Naive thymus-derived CD4-positive, alpha-beta T cell (primary cell): ENCODE measurements at regions of chr16 and their contacts with region 1.

Region 1: GRCh38 chr16:68310761-68311511 is at the starts of genes PRMT7 and SLC7A6OS:
- DNase-seq: peak; percentile 77 to 94 (median 92)
- ATAC-seq: peak; percentile 99
- H3K4me3 ChIP-seq: peak within 1 kb of the TSS; percentile 99
- H3K4me3 Mint-ChIP-seq: peak within 1 kb of the TSS; percentile 88 to 100 (median 98)
- H3K27ac ChIP-seq: peak within 1 kb of the TSS; percentile 91
- H3K27ac Mint-ChIP-seq: peak within 1 kb of the TSS; percentile 77 to 99 (median 96)
- H3K4me1 ChIP-seq: peaks cover 25 to 32% of the 10 kb centered on the region in 2 donors
- H3K4me1 Mint-ChIP-seq: peaks cover 33 to 69% (median 59%) of the 10 kb centered on the region in 7 donors
- H3K27me3 ChIP-seq: no peaks in the 10 kb centered on the region
- H3K27me3 Mint-ChIP-seq: no peaks in the 10 kb centered on the region
- total RNA-seq, gene PRMT7: 60.8 to 95.1 (median 89.4) TPM
- total RNA-seq, gene SLC7A6OS: 31.4 to 50.3 (median 34.8) TPM

Region 2: GRCh38 chr16:67480833-67481560 is 829.9 kb before region 1 on chr16 and contains the start of gene ATP6V0D1:
- CTCF ChIA-PET with region 1: no interaction called
- POLR2A ChIA-PET with region 1: no interaction called
- intact Hi-C with region 1: no loop called
- DNase-seq: peak; percentile 97 to 100 (median 99)
- ATAC-seq: peak; percentile 94
- H3K4me3 ChIP-seq: peak within 1 kb of the TSS; percentile 92
- H3K4me3 Mint-ChIP-seq: peak within 1 kb of the TSS; percentile 95 to 100 (median 99)
- H3K27ac ChIP-seq: peak within 1 kb of the TSS; percentile 99
- H3K27ac Mint-ChIP-seq: peak within 1 kb of the TSS; percentile 95 to 99 (median 98)
- H3K4me1 ChIP-seq: peaks cover 15 to 25% of the 10 kb centered on the region in 2 donors
- H3K4me1 Mint-ChIP-seq: peaks cover 20 to 60% (median 37%) of the 10 kb centered on the region in 7 donors
- H3K27me3 ChIP-seq: no peaks in the 10 kb centered on the region
- H3K27me3 Mint-ChIP-seq: no peaks in the 10 kb centered on the region
- total RNA-seq, gene ATP6V0D1: 35.8 to 104 (median 54.7) TPM

Region 3: DNA sequence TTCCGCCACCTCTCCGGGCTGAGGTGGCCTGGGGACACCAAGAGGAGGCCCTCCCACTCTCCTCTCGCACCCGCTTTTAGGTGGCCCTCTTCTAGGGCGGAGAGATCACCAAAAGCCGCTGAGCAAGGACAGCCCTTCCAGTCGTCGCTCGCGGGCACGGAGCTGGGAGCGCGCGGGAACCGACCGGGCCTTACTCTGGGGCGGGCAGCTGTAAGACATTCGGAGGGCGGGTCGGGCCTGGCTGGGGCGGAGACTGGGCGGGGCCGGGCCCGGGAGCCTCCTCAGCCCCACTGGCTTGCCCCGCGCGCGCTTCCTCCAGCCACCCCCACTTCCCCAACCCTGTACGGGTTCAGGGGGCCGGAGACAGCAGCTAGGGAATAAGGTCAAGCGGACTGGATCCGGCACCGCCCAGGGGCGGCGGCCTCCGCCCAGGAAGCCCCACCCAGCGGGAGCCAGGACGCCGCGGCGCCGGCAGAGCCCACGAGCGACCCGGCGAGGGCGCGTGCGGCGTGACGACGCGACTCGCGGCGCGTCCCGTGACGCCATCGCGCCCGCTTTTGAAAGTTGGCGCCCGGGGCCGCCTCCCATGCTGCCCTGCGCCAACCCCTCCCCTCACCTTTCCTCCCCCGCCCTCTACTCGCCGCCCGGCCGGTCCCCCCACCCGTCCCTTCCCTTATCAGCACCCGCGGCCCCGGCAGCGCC is 749.0 kb before region 1 on chr16:
- CTCF ChIA-PET with region 1: no interaction called
- POLR2A ChIA-PET with region 1: no interaction called
- intact Hi-C with region 1: loop called in 1 of 2 experiments (anchors 5 kb)
- DNase-seq: peak; percentile 93 to 98 (median 96)
- ATAC-seq: peak; percentile 86
- H3K4me3 ChIP-seq: peak overlapping the region; percentile 72
- H3K4me3 Mint-ChIP-seq: peak overlapping the region; percentile 85 to 93 (median 90)
- H3K27ac ChIP-seq: peak overlapping the region; percentile 98
- H3K27ac Mint-ChIP-seq: peak overlapping the region; percentile 90 to 99 (median 96)
- H3K4me1 ChIP-seq: peaks cover 30 to 36% of the 10 kb centered on the region in 2 donors
- H3K4me1 Mint-ChIP-seq: peaks cover 28 to 64% (median 46%) of the 10 kb centered on the region in 7 donors
- H3K27me3 ChIP-seq: no peaks in the 10 kb centered on the region
- H3K27me3 Mint-ChIP-seq: no peaks in the 10 kb centered on the region

Region 4: GRCh38 chr16:68237243-68238028 is 73.5 kb before region 1 on chr16:
- CTCF ChIA-PET with region 1: interaction called, 4 read pairs
- POLR2A ChIA-PET with region 1: interaction called, 3 read pairs
- intact Hi-C with region 1: loop called in 1 of 2 experiments (anchors 2 kb)
- DNase-seq: peak; percentile 71 to 90 (median 83)
- ATAC-seq: peak; percentile 88
- H3K4me3 ChIP-seq: peak overlapping the region; percentile 91
- H3K4me3 Mint-ChIP-seq: peak overlapping the region; percentile 90 to 99 (median 96)
- H3K27ac ChIP-seq: peak overlapping the region; percentile 67
- H3K27ac Mint-ChIP-seq: peak overlapping the region; percentile 72 to 95 (median 87)
- H3K4me1 ChIP-seq: peaks cover 6 to 10% of the 10 kb centered on the region in 2 donors
- H3K4me1 Mint-ChIP-seq: peaks cover 23 to 45% (median 34%) of the 10 kb centered on the region in 7 donors
- H3K27me3 ChIP-seq: no peaks in the 10 kb centered on the region
- H3K27me3 Mint-ChIP-seq: peaks cover 0 to 13% (median 0%) of the 10 kb centered on the region in 5 donors

Region 5: DNA sequence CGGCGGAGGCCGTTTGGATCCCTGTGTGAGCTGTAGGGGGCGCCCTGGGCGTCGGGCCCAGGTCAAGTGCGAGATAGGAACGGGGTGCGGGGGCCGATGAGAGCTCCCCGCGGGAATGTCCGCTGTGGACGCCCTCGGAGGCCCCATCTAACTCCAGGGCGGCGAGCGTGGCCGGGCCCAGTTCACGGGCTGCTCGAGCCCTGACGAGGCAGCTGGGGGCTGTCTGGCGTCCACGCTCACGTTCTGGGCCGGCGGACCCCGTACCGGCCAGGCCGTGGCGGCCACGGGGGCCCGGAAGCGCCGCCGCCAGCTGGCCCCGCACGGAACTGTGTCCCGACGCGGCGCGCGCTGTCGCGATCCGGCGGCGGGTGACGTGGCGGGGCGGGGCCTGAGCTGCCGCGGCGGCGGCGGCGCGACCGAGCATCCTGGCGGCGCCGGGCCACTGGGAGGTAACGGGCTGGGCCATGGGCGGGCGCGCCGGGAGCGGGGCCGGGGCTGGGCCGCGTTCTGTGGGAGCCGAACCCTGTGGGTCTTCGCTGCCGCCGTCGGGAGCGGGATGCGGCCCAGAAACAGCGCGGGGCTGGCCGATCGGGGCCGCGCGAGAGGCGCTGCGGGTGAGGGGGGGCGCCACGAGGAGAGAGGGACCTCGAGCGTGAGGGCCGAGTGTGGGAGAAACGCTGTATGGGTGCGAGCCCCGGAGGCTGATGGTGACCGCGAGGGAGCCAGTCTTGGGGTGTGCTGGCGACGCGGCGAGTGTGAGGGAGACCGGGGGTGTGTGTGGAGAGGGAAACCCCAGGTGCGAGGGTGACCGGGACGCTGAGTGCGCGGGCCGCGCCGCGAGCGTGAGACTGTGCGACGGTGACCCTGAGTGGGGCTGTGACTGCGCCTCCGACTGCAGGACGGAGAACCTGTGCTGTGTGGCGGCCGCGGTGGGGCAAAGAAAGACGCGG is 46.5 kb before region 1 on chr16 and contains the start of gene SLC7A6:
- CTCF ChIA-PET with region 1: interaction called, 58 read pairs
- POLR2A ChIA-PET with region 1: interaction called, 68 read pairs
- intact Hi-C with region 1: loop called (anchors 1 kb)
- DNase-seq: peak; percentile 78 to 91 (median 84)
- ATAC-seq: peak; percentile 83
- H3K4me3 ChIP-seq: peak within 1 kb of the TSS; percentile 78
- H3K4me3 Mint-ChIP-seq: peak within 1 kb of the TSS; percentile 93 to 100 (median 97)
- H3K27ac ChIP-seq: peak within 1 kb of the TSS; percentile 99
- H3K27ac Mint-ChIP-seq: peak within 1 kb of the TSS; percentile 89 to 100 (median 98)
- H3K4me1 ChIP-seq: peaks cover 27 to 39% of the 10 kb centered on the region in 2 donors
- H3K4me1 Mint-ChIP-seq: peaks cover 40 to 69% (median 56%) of the 10 kb centered on the region in 7 donors
- H3K27me3 ChIP-seq: no peaks in the 10 kb centered on the region
- H3K27me3 Mint-ChIP-seq: no peaks in the 10 kb centered on the region
- total RNA-seq, gene SLC7A6: 112 to 248 (median 207) TPM

Region 6: GRCh38 chr16:68283801-68284598 is 26.9 kb before region 1 on chr16:
- CTCF ChIA-PET with region 1: interaction called, 6 read pairs
- POLR2A ChIA-PET with region 1: interaction called, 90 read pairs
- intact Hi-C with region 1: loop called (anchors 1 kb)
- DNase-seq: no peak
- ATAC-seq: no peak
- H3K4me3 ChIP-seq: peak overlapping the region; percentile 62
- H3K4me3 Mint-ChIP-seq: peak overlapping the region; percentile 78 to 93 (median 84)
- H3K27ac ChIP-seq: peak overlapping the region; percentile 68
- H3K27ac Mint-ChIP-seq: peak overlapping the region; percentile 84 to 92 (median 91)
- H3K4me1 ChIP-seq: peaks cover 71 to 97% of the 10 kb centered on the region in 2 donors
- H3K4me1 Mint-ChIP-seq: peaks cover 80 to 97% (median 89%) of the 10 kb centered on the region in 7 donors
- H3K27me3 ChIP-seq: no peaks in the 10 kb centered on the region
- H3K27me3 Mint-ChIP-seq: no peaks in the 10 kb centered on the region

Region 7: DNA sequence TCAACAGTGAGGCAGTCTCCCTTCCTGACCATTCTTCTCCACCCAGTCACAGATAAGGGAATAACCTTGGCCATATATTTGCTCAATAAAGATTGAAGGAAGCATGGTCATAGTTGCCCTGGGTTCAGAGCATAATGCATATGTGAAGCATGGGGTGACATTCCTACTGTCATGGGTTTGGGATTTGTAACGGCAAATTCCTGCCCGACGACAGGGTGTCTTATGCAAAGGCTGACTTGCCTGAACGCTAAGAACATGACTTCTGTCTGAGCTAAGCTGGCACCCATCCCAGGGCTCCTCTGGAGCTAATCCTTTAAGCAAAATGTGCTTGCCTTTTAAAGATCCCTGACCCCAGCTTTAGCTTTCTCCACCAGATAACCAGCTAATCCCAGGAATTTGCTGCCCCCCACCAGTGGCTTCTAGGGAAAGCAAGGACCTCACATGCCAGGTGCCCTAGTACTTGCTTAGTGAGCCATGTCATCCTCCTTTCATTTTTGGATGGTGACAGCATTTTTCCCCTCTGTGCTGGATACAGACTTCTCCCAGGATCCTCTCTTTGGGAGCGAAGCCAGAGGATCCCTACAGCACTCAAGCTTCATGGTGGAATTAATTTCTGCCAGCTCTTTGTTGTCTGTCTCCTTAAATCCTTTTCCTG is 11.9 kb before region 1 on chr16:
- CTCF ChIA-PET with region 1: interaction called, 5 read pairs
- POLR2A ChIA-PET with region 1: interaction called, 90 read pairs
- intact Hi-C with region 1: no loop called
- DNase-seq: no peak
- ATAC-seq: no peak
- H3K4me3 ChIP-seq: no peak overlapping the region
- H3K4me3 Mint-ChIP-seq: no peak overlapping the region
- H3K27ac ChIP-seq: peak overlapping the region; percentile 20
- H3K27ac Mint-ChIP-seq: peak overlapping the region; percentile 1 to 80 (median 30)
- H3K4me1 ChIP-seq: no peaks in the 10 kb centered on the region
- H3K4me1 Mint-ChIP-seq: peaks cover 5 to 73% (median 40%) of the 10 kb centered on the region in 7 donors
- H3K27me3 ChIP-seq: no peaks in the 10 kb centered on the region
- H3K27me3 Mint-ChIP-seq: no peaks in the 10 kb centered on the region

Region 8: GRCh38 chr16:68470461-68471150 is 159.7 kb after region 1 on chr16:
- CTCF ChIA-PET with region 1: no interaction called
- POLR2A ChIA-PET with region 1: no interaction called
- intact Hi-C with region 1: no loop called
- DNase-seq: no peak
- ATAC-seq: peak; percentile 91
- H3K4me3 ChIP-seq: peak overlapping the region; percentile 68
- H3K4me3 Mint-ChIP-seq: peak overlapping the region; percentile 78 to 92 (median 86)
- H3K27ac ChIP-seq: peak overlapping the region; percentile 48
- H3K27ac Mint-ChIP-seq: peak overlapping the region; percentile 73 to 95 (median 87)
- H3K4me1 ChIP-seq: peaks cover 21 to 38% of the 10 kb centered on the region in 2 donors
- H3K4me1 Mint-ChIP-seq: peaks cover 38 to 53% (median 49%) of the 10 kb centered on the region in 7 donors
- H3K27me3 ChIP-seq: no peaks in the 10 kb centered on the region
- H3K27me3 Mint-ChIP-seq: peaks cover 0 to 15% (median 0%) of the 10 kb centered on the region in 5 donors

Region 9: GRCh38 chr16:68538880-68539701 is 228.2 kb after region 1 on chr16 and contains the start of gene ZFP90:
- CTCF ChIA-PET with region 1: no interaction called
- POLR2A ChIA-PET with region 1: no interaction called
- intact Hi-C with region 1: loop called in 1 of 2 experiments (anchors 1 kb)
- DNase-seq: peak; percentile 82 to 91 (median 88)
- ATAC-seq: peak; percentile 94
- H3K4me3 ChIP-seq: peak within 1 kb of the TSS; percentile 66
- H3K4me3 Mint-ChIP-seq: peak within 1 kb of the TSS; percentile 86 to 99 (median 97)
- H3K27ac ChIP-seq: peak within 1 kb of the TSS; percentile 94
- H3K27ac Mint-ChIP-seq: peak within 1 kb of the TSS; percentile 97 to 100 (median 100)
- H3K4me1 ChIP-seq: peaks cover 13 to 14% of the 10 kb centered on the region in 2 donors
- H3K4me1 Mint-ChIP-seq: peaks cover 13 to 32% (median 24%) of the 10 kb centered on the region in 7 donors
- H3K27me3 ChIP-seq: no peaks in the 10 kb centered on the region
- H3K27me3 Mint-ChIP-seq: no peaks in the 10 kb centered on the region
- total RNA-seq, gene ZFP90: 25.7 to 49.4 (median 38.8) TPM